WTC11 (cell line): ENCODE measurements at regions of chr12 and their contacts with region 1.

Region 1: DNA sequence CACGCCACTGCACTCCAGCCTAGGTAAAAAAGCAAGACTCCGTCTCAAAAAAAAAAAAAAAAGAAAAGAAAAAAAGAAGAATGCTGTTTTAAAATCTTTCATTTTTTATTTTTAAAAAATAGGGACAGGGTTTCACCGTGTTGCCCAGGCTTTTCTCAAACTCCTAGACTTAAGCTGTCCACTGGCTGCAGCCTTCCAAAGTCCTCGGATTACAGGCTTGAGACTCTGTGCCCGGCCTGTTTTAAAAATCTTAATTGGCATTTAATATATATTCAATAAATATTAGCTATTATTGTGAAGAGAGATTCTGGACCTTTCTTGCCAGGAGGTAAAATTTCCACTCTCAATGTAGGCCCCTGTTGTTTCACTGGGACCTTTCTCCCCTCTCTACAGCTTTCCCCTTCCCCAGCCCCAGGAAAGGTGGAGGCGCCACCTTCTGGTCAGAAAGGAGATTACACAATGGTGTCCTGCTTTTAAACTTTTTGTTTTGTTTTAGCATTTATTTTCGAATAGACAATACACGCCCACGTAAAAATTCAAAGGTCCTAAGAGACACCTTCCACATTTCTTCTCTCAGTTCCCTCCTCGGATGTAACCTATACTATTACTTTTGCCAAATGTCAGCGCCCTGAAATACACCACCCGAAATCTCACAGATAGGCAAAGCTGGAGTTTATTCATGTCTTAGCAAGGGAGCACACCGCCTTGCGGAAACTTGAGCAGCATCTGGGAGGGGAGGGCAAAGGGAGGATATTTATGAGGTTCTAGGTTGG is 23.8 kb upstream of the PHC1 start:
- DNase-seq: peak; percentile 72
- ATAC-seq: peak; percentile 95
- H3K4me3 Mint-ChIP-seq: peak overlapping the region; percentile 68
- H3K27ac Mint-ChIP-seq: peak overlapping the region; percentile 68
- H3K4me1 Mint-ChIP-seq: peaks cover 20% of the 10 kb centered on the region
- H3K27me3 Mint-ChIP-seq: no peaks in the 10 kb centered on the region
- CTCF ChIP-seq: peak; percentile 87

Region 2: DNA sequence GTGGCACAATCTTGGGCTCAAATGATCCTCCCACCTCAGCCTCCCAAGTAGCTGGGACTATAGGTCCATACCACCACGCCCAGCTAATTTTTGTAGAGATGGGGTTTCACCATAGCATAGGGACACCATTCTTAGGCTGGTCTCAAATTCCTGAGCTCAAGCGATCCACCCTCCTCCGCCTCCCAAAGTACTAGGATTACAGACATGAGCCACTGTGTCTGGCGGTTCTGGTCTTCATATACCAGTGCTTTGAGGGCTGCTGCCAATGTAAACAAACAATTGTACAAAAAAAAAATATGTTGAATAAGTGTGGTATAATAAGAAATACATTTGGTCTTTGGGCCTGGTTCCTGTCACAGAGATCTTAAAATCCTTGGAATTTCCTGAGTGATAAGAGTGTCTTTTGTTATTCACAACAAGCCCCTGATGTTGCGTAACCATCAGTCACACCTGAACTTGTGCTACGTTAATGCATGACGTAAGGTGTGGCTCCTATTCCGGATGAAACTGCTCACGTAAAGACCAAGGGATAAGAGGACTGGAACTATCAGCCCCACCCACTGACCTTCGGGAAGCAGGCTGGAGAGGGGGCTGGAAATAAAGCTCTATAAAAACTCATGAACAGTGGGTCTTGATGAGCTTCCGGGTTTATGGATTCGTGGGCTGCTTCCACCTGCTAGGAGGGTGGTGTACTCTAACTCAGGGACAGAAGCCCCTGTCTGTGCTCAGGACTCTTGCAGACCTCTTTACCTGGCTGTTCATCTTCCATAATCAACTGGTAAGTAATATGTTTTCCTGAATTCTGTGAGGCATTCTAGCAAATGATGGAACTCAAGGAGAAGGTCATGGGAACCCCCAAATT is 209.2 kb before region 1 on chr12:
- CTCF ChIA-PET with region 1: interaction called, 21 read pairs
- POLR2A ChIA-PET with region 1: no interaction called
- DNase-seq: no peak
- ATAC-seq: peak; percentile 55
- H3K4me3 Mint-ChIP-seq: peak overlapping the region; percentile 64
- H3K27ac Mint-ChIP-seq: peak overlapping the region; percentile 93
- H3K4me1 Mint-ChIP-seq: peaks cover 30% of the 10 kb centered on the region
- H3K27me3 Mint-ChIP-seq: no peaks in the 10 kb centered on the region
- CTCF ChIP-seq: no peak

Region 3: DNA sequence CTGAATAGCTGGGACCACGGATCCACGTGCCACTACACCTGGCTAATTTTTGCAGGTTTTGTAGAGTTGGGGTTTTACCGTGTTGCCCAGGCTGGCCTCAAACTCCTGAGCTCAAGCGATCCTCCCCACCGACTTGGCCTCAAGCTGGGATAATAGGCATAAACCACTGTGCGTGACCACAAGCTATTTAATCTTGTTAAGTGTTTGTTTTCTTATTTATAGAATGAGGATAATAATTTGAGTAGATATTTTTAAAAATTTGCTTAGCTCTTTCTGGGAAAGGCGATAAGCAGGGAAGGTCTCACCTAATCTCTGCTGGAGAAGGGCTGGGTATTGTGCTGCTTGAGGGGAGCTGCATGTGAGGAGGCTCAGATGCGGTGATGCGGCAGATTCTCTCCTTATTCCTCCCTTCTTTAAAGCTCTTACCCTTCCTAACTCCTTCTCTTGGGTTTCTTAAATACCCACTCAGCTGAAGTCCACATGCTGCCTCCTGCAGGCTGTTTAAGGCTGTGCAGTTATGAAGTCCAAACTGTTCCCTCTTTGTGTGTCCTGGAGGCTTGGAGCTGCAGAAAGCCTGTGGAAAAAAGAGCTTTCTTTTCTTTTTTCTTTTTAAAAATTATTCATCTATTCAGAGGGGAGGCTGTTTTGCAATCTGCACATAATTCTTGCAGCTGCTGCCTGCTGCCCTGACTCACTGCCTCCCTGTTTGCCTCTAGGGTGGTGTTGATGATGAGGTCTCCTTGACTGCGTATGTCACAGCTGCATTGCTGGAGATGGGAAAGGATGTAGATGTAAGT is 30.1 kb before region 1 on chr12:
- CTCF ChIA-PET with region 1: interaction called, 74 read pairs
- POLR2A ChIA-PET with region 1: interaction called, 3 read pairs
- DNase-seq: peak; percentile 64
- ATAC-seq: peak; percentile 98
- H3K4me3 Mint-ChIP-seq: no peak overlapping the region
- H3K27ac Mint-ChIP-seq: no peak overlapping the region
- H3K4me1 Mint-ChIP-seq: peaks cover 11% of the 10 kb centered on the region
- H3K27me3 Mint-ChIP-seq: no peaks in the 10 kb centered on the region
- CTCF ChIP-seq: peak; percentile 70

Region 4: GRCh38 chr12:8876887-8877286 is 13.6 kb before region 1 on chr12:
- CTCF ChIA-PET with region 1: interaction called, 13 read pairs
- POLR2A ChIA-PET with region 1: no interaction called
- DNase-seq: no peak
- ATAC-seq: no peak
- H3K4me3 Mint-ChIP-seq: no peak overlapping the region
- H3K27ac Mint-ChIP-seq: peak overlapping the region; percentile 61
- H3K4me1 Mint-ChIP-seq: peaks cover 25% of the 10 kb centered on the region
- H3K27me3 Mint-ChIP-seq: no peaks in the 10 kb centered on the region
- CTCF ChIP-seq: no peak

Region 5: DNA sequence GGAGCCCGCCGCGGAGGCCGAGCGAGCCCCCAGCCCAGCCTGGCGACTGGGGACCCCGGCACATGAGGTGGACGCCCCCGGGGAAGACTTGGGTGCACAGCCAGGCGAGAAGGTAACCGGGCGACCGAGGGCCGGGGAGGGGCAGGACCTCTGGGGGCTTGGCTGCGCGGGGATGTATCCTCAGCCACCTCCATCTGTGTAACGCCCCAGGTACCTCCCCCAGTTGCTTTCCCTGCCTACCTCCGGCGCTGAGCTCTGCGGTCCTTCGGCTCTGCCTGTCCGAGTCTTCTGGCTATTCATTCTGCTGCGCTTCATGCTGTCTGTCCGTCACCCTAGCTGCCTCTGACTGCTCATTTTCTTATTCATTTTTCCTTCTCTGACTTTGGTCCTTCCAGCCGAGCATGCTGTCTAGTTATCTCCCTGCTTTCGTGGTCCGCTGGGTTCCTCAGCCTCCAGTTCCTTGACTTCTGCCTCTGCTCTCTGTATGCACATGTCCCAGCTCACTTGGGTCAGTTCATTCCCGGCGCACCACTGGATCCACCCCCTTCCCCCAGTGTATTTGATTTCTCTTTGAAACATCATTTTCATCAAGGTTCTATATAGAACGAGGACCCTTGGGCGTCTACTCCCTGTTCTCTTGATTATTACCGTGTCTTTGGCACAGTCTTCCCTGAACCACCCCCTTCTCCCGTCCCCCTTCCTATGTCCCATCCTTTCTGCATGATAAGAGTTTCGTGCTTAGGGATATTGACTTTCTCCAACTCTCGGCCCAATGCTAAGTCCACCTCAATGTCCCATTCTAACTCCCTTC is 24.4 kb after region 1 on chr12:
- CTCF ChIA-PET with region 1: interaction called, 28 read pairs
- POLR2A ChIA-PET with region 1: interaction called, 3 read pairs
- DNase-seq: peak; percentile 73
- ATAC-seq: peak; percentile 60
- H3K4me3 Mint-ChIP-seq: no peak overlapping the region
- H3K27ac Mint-ChIP-seq: no peak overlapping the region
- H3K4me1 Mint-ChIP-seq: peaks cover 48% of the 10 kb centered on the region
- H3K27me3 Mint-ChIP-seq: no peaks in the 10 kb centered on the region
- CTCF ChIP-seq: no peak

Region 6: GRCh38 chr12:9115731-9116559 is 225.4 kb after region 1 on chr12 and contains the start of gene A2M:
- CTCF ChIA-PET with region 1: no interaction called
- POLR2A ChIA-PET with region 1: no interaction called
- DNase-seq: no peak
- ATAC-seq: peak; percentile 47
- H3K4me3 Mint-ChIP-seq: no peak within 1 kb of the TSS
- H3K27ac Mint-ChIP-seq: no peak within 1 kb of the TSS; the same call in 1 of the 2 replicates
- H3K4me1 Mint-ChIP-seq: peaks cover 17% of the 10 kb centered on the region
- H3K27me3 Mint-ChIP-seq: no peaks in the 10 kb centered on the region; the same call in 1 of the 2 replicates
- CTCF ChIP-seq: no peak
- total RNA-seq, gene A2M: 1.9 to 3.4 TPM (median 3.3 TPM) in 3 replicates